GM18951 (cell line): ENCODE measurements at regions of chr6 and their contacts with region 1.

Region 1: GRCh38 chr6:45421709-45422502 is 44.2 kb upstream of the SUPT3H start:
- POLR2A ChIP-seq: no peak

Region 2: DNA sequence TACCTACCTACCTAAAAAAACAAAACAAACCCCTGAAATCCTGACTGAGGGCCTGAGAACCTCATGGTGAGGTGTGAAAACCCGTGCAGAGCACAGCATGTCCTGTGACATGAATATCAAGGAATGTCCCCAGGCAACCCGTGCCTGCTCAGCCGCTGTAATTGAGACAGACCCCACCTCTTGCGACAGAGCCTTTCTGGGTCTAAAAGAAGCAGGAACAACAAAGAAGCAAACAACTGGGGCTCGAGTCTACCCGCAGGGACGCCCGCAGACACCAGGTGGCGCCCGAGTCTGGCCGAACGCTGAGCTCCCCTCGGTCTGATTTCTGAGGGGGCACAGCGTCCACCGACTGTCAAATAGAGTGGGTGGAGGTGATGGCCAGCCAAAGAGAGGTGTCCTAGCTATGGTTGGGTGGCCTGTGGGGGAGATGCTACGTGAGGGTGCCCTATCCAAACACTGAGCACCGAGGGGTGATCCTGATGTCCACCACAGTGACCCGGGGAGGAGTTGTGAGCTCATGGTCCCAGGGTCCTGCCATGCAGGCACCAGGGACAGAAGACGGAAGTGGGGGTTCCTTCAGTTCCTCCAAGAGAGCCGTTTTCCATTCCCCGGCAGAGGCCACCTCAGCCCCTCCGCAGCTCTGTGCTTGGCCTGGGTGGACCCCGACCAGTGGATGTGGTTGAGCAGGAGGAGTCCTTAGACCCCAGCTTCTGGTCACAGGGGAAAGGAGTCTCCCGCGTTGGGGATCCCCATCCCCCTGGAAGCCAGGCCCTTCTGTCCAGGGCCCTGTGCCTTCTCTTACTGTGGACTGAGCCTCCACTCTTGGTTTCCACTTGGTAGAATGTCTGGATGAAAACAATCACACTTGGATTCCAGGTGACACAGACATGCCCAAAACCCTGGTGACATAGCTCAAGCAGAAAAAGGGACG is 766.2 kb before region 1 on chr6:
- in situ Hi-C with region 1: loop called (anchors 10 kb)
- POLR2A ChIP-seq: no peak

Region 3: GRCh38 chr6:45714741-45715507 is 293.0 kb after region 1 on chr6:
- in situ Hi-C with region 1: loop called (anchors 10 kb)
- POLR2A ChIP-seq: no peak

Region 4: DNA sequence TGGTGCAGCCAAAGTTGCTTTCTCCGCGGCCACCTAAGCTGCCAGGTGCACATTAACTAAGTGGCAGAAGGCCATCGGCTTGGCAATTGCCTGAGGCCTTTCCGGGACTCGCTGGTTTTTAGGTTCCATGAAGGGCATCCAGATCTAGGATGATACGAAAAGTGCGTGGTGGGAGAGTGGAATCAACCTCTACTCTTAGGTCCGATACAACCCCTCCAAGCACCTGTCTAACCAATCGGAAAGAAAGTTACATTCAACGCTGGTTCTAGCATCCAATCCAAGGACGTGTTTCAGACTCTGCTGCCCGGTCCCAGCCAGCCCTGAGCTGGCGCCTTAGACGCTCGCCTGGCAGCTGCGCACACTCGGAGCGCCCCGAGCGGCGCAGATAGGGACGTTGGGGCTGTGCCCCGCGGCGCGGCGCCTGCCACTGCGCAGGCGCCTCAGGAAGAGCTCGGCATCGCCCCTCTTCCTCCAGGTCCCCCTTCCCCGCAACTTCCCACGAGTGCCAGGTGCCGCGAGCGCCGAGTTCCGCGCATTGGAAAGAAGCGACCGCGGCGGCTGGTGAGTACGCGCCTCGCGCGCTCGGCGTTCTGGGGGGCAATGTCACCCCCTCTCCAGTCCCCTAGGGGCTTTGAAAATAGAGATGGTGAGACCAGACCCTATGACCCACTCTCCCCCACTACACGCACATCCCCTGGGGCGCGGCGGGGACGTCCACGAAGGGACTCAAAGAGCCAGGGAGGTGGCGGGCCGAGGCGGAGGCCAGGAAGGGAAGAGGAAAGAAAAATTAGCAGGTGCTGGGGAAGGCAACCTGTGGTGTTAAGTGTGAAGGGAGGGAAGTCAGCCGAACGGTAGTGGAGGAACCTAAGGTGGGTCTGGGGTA is 708.0 kb after region 1 on chr6 and contains the start of gene ENPP4:
- in situ Hi-C with region 1: no loop called
- POLR2A ChIP-seq: peak; percentile 66